Heart left ventricle (tissue), 16 donors: ENCODE measurements at regions of chr15 and their contacts with region 1.

Region 1: GRCh38 chr15:91926908-91927270 is 73.4 kb downstream of the SLCO3A1 start:
- DNase-seq: no peak
- ATAC-seq: peak; percentile 33 to 54 (median 36)
- H3K4me3 ChIP-seq: no peak overlapping the region
- H3K27ac ChIP-seq: peak overlapping the region in 11 of 12 donors; percentile 4 to 69 (median 47)
- H3K4me1 ChIP-seq: peaks cover 6 to 85% (median 76%) of the 10 kb centered on the region in 12 donors
- H3K27me3 ChIP-seq: no peaks in the 10 kb centered on the region
- CTCF ChIP-seq: no peak
- POLR2A ChIP-seq: no peak

Region 2: GRCh38 chr15:91885714-91886270 is 41.1 kb before region 1 on chr15:
- intact Hi-C with region 1: loop called in 2 of 10 experiments (anchors 5 kb)
- DNase-seq: no peak
- ATAC-seq: peak in 3 of 4 donors; percentile 14 to 29 (median 22)
- H3K4me3 ChIP-seq: no peak overlapping the region
- H3K27ac ChIP-seq: no peak overlapping the region
- H3K4me1 ChIP-seq: peaks cover 3 to 83% (median 46%) of the 10 kb centered on the region in 12 donors
- H3K27me3 ChIP-seq: no peaks in the 10 kb centered on the region
- CTCF ChIP-seq: peak in 8 of 12 donors; percentile 14 to 42 (median 26)
- POLR2A ChIP-seq: no peak